H1 (cell line): ENCODE measurements at regions of chr17 and their contacts with region 1.

Region 1: DNA sequence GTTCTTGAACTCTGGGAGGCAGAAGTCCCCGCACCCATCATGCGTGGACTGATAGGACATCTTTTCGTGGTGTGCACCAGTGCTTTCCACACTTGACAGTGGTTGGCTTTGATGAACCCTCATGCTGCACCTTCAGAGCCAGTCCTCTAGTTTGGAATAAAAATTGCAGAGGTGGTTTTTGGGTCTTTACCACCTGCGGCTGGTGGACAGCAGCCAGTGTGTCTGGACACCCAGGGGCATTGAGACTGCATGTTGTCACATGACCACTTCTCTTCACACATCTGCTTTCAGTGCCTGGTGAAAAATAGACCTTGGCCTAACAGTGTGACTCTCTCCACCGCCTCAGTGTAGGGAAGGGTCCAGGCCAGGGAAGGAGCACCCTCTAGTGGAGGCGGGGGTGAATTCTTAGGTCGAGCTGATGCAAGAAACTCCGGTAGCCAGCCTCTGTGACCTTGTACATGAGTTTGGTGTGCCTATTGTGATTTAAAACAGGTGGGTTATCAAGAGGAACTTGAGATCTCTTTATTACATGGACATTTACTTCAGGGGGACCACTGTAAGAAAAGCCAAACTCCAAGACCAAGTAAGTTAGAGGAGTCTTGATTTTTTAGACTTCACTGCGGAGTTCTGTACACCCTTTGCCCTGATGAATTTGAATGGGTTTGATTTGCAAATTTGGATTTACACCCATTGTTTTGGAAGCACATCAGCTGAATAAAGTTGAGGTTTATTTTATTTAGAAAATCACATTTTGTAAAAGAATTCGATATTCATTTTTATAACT is 17.9 kb downstream of the GOSR2 start:
- DNase-seq: peak; percentile 56 to 89
- H3K4me3 ChIP-seq: no peak overlapping the region
- H3K27ac ChIP-seq: no peak overlapping the region
- H3K4me1 ChIP-seq: peaks cover 6 to 16% (median 9%) of the 10 kb centered on the region in 4 experiments
- H3K27me3 ChIP-seq: no peaks in the 10 kb centered on the region
- CTCF ChIP-seq: peak; percentile 90 to 98 (median 90)
- EP300 ChIP-seq: no peak
- POLR2A ChIP-seq: no peak
- RAD21 ChIP-seq: peak; percentile 93 to 94

Region 2: GRCh38 chr17:46742565-46743270 is 198.1 kb before region 1 on chr17:
- CTCF ChIA-PET with region 1: no interaction called
- POLR2A ChIA-PET with region 1: no interaction called
- DNase-seq: no peak
- H3K4me3 ChIP-seq: no peak overlapping the region
- H3K27ac ChIP-seq: no peak overlapping the region
- H3K4me1 ChIP-seq: peaks cover 0 to 3% (median 0%) of the 10 kb centered on the region in 4 experiments; a peak in 1 of 7 replicates
- H3K27me3 ChIP-seq: peaks cover 0 to 4% (median 0%) of the 10 kb centered on the region in 4 experiments; a peak in 2 of 7 replicates
- CTCF ChIP-seq: no peak
- EP300 ChIP-seq: no peak
- POLR2A ChIP-seq: no peak
- RAD21 ChIP-seq: no peak

Region 3: GRCh38 chr17:46811978-46812583 is 128.7 kb before region 1 on chr17:
- CTCF ChIA-PET with region 1: interaction called, 11 read pairs
- POLR2A ChIA-PET with region 1: no interaction called
- DNase-seq: no peak
- H3K4me3 ChIP-seq: no peak overlapping the region
- H3K27ac ChIP-seq: no peak overlapping the region
- H3K4me1 ChIP-seq: peaks cover 0 to 29% (median 7%) of the 10 kb centered on the region in 4 experiments; a peak in 6 of 7 replicates
- H3K27me3 ChIP-seq: peaks cover 7 to 29% (median 23%) of the 10 kb centered on the region in 4 experiments
- CTCF ChIP-seq: no peak
- EP300 ChIP-seq: no peak
- POLR2A ChIP-seq: no peak
- RAD21 ChIP-seq: no peak

Region 4: DNA sequence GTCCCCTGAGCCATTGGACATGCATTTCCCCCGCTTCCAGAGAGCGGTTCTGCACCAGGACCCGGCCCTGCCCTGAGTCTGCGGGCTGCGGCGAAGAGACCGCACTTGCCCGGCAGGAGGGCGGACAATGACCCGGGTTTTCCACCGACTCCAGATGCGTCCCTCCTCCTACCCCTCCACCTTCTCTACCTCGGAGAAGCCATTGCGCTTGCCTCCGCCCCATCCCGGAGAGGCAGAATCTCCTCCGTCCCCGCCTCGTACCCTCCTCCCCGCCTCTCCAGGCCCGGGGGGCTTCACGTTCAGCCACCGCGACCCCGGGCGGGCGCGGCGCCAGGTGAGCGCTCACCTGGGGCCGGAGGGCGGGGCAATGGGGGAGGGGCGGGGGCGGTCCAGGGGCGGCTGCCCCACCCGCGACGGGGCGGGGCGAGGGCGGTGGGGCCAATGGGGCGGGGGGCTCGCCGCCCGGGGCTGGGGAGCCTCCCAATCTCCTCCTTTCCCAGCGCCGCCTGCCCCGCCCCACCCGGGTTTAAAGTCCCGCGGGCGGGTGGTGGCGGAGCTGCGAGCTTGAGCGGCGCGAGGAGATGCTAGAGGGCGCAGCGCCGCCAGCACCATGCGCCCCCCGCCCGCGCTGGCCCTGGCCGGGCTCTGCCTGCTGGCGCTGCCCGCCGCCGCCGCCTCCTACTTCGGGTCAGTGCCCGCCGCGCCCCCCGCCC is 89.6 kb before region 1 on chr17 and contains the start of gene WNT9B:
- CTCF ChIA-PET with region 1: interaction called, 18 read pairs
- POLR2A ChIA-PET with region 1: interaction called, 4 read pairs
- DNase-seq: peak in 1 of 2 experiments; percentile 83
- H3K4me3 ChIP-seq: peak within 1 kb of the TSS; percentile 56 to 87 (median 65)
- H3K27ac ChIP-seq: no peak within 1 kb of the TSS
- H3K4me1 ChIP-seq: peaks cover 0 to 5% (median 3%) of the 10 kb centered on the region in 4 experiments; a peak in 4 of 7 replicates
- H3K27me3 ChIP-seq: peaks cover 20 to 47% (median 38%) of the 10 kb centered on the region in 4 experiments
- CTCF ChIP-seq: peak in 1 of 3 experiments; percentile 2; a peak in 1 of 4 replicates
- EP300 ChIP-seq: no peak
- POLR2A ChIP-seq: no peak
- RAD21 ChIP-seq: no peak
- total RNA-seq, gene WNT9B: not detected in 2 replicates

Region 5: GRCh38 chr17:46876353-46876887 is 64.4 kb before region 1 on chr17:
- CTCF ChIA-PET with region 1: interaction called, 28 read pairs
- POLR2A ChIA-PET with region 1: interaction called, 4 read pairs
- DNase-seq: peak in 1 of 2 experiments; percentile 74
- H3K4me3 ChIP-seq: no peak overlapping the region
- H3K27ac ChIP-seq: no peak overlapping the region
- H3K4me1 ChIP-seq: no peaks in the 10 kb centered on the region
- H3K27me3 ChIP-seq: no peaks in the 10 kb centered on the region; a peak in 2 of 7 replicates
- CTCF ChIP-seq: peak; percentile 73 to 79 (median 74)
- EP300 ChIP-seq: no peak
- POLR2A ChIP-seq: no peak
- RAD21 ChIP-seq: peak; percentile 54 to 68; a peak in 3 of 4 replicates

Region 6: DNA sequence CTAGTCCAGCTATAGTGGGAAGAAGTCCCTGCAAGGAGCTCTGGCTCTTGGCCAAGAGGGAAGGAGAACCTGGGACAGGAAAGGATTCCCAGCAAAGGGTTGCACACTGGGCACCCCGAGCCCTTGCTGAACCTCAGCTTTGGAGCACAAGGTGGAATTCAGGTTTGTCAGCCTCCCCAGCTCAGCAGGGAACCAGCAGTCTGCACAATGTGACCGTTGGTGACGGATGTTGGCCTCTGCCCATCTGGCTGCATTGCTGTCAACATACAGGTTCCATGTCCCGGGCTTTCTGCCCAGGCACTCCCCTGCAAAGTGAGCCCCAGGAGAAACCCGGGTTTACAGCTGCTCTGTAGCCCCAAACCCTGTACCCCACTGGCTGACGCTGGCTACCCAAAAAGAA is 31.5 kb after region 1 on chr17:
- CTCF ChIA-PET with region 1: interaction called, 51 read pairs
- POLR2A ChIA-PET with region 1: interaction called, 24 read pairs
- DNase-seq: no peak
- H3K4me3 ChIP-seq: no peak overlapping the region
- H3K27ac ChIP-seq: no peak overlapping the region
- H3K4me1 ChIP-seq: peaks cover 7 to 8% (median 7%) of the 10 kb centered on the region in 4 experiments; a peak in 6 of 7 replicates
- H3K27me3 ChIP-seq: no peaks in the 10 kb centered on the region; a peak in 1 of 7 replicates
- CTCF ChIP-seq: no peak
- EP300 ChIP-seq: no peak
- POLR2A ChIP-seq: no peak
- RAD21 ChIP-seq: no peak

Region 7: GRCh38 chr17:47004906-47005305 is 64.1 kb after region 1 on chr17:
- CTCF ChIA-PET with region 1: interaction called, 154 read pairs
- POLR2A ChIA-PET with region 1: interaction called, 7 read pairs
- DNase-seq: no peak
- H3K4me3 ChIP-seq: no peak overlapping the region
- H3K27ac ChIP-seq: no peak overlapping the region
- H3K4me1 ChIP-seq: no peaks in the 10 kb centered on the region
- H3K27me3 ChIP-seq: no peaks in the 10 kb centered on the region
- CTCF ChIP-seq: no peak
- EP300 ChIP-seq: no peak
- POLR2A ChIP-seq: no peak
- RAD21 ChIP-seq: no peak